ENCODE measurements at regions of chr11 and their contacts with region 1.

Region 1: DNA sequence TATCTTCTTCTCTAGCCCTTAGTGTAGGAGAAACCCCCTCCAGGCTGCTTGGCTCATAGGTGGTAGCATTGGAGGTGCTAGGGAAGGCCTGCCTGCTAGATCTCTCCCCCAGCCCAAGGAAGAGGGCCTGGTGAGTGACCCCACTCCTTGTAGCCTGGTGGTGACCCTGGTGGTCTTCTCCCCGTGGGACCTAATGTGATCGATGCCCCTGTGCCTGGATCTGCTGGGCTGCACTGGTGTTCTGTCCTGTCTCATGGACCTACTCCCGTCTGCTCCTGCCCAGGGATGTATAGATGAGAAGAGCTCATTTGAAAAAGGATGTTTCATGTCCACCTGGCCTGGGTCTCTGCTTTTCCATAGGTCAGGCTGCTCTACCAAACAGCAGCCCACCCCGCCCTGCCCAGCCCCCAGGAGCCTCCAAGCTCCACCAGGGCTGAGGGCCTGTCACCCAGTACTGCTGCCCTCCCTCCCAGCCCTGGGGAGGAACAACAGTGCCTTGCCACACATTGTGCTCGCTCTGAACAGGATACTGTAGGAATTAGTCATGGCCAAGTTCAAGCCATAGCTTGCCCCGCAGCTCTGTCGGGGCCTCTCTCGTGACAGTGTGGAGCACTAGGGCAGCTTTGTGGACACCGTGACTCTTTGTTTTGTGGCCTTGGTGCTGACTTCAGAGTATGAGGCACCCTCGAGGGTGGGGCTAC is 19.7 kb downstream of the SLC37A2 start:
- DNase-seq: no peak
- H3K4me3 ChIP-seq: no peak overlapping the region
- H3K27ac ChIP-seq: no peak overlapping the region
- H3K4me1 ChIP-seq: no peaks in the 10 kb centered on the region
- H3K27me3 ChIP-seq: no peaks in the 10 kb centered on the region
- CTCF ChIP-seq: no peak

Region 2: DNA sequence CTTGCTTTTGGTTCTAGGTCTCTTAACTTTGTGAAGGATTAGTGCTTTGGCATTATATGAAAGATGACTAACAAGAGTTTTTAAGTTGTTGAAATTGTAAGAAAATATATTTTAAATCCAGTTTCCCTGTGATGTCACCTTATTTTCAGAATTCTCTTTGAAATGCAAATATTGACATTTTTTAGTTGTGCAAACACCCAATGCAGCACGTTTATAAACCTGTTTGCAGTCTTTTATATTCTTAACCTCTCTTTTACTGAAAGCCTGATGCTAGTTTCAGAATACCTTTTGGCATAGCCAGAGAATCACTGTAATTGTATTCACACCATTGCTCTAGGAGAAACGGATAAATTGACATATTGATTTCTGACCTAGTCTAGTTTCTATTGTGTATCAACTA is 62.4 kb before region 1 on chr11:
- intact Hi-C with region 1: no loop called
- DNase-seq: no peak
- H3K4me3 ChIP-seq: no peak overlapping the region
- H3K27ac ChIP-seq: no peak overlapping the region
- H3K4me1 ChIP-seq: no peaks in the 10 kb centered on the region
- H3K27me3 ChIP-seq: no peaks in the 10 kb centered on the region
- CTCF ChIP-seq: no peak

Region 3: DNA sequence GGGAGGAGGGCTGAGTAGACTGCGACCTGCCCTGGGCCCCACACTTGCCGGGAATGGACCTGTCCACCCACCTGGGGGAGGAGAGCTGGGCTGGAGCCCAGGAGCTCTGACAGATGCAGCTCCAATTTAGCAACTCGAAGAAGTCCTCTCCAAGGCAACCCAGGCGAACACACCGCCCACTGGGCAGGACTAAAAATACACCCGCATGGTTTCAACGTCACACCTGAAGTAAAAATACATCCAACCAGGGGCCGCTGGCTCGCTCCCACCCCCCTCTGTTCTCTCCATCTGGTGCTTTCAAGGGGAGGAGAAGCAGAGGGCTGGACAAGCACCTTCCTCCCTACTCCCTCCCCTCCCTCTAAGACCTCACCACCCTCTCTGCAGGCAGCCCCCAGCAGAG is 293.4 kb after region 1 on chr11:
- intact Hi-C with region 1: no loop called
- DNase-seq: no peak
- H3K4me3 ChIP-seq: no peak overlapping the region
- H3K27ac ChIP-seq: no peak overlapping the region
- H3K4me1 ChIP-seq: no peaks in the 10 kb centered on the region
- H3K27me3 ChIP-seq: no peaks in the 10 kb centered on the region
- CTCF ChIP-seq: no peak

Region 4: GRCh38 chr11:125410091-125410490 is 327.3 kb after region 1 on chr11:
- intact Hi-C with region 1: loop called (anchors 10 kb)
- DNase-seq: no peak
- H3K4me3 ChIP-seq: no peak overlapping the region
- H3K27ac ChIP-seq: no peak overlapping the region
- H3K4me1 ChIP-seq: no peaks in the 10 kb centered on the region
- H3K27me3 ChIP-seq: no peaks in the 10 kb centered on the region
- CTCF ChIP-seq: no peak